ENCODE measurements at regions of chr1 and their contacts with region 1.

Region 1: GRCh38 chr1:56457756-56458375 is 121.5 kb downstream of the PLPP3 start:
- DNase-seq: no peak
- ATAC-seq: no peak
- H3K4me3 ChIP-seq: no peak overlapping the region
- H3K4me3 Mint-ChIP-seq: no peak overlapping the region
- H3K27ac ChIP-seq: no peak overlapping the region
- H3K27ac Mint-ChIP-seq: no peak overlapping the region
- H3K4me1 ChIP-seq: no peaks in the 10 kb centered on the region
- H3K4me1 Mint-ChIP-seq: peaks cover 3% of the 10 kb centered on the region
- H3K27me3 ChIP-seq: peaks cover 0 to 2% (median 0%) of the 10 kb centered on the region in 4 experiments
- H3K27me3 Mint-ChIP-seq: no peaks in the 10 kb centered on the region
- CTCF ChIP-seq: no peak

Region 2: DNA sequence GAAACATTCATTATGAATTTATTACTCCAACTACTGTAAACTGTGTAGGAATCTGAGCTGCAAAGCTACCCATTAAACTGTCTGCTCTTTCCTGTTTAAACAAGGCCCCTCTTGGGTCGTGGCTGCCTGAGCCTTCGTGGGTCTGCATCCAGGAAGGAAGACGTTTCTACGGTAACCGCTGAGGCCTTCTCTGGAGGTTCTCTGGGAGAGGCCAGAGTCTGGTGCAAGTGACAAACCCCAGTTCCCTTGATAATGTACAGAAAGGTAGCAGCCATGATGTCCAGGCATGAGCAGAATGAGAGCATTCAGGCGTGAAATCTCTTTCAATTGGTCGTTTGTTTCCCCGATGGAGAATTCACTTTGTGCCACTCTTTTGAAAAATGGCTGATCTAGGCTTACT is 228.7 kb before region 1 on chr1:
- CTCF ChIA-PET with region 1: no interaction called
- POLR2A ChIA-PET with region 1: no interaction called
- intact Hi-C with region 1: no loop called
- DNase-seq: no peak
- ATAC-seq: no peak
- H3K4me3 ChIP-seq: no peak overlapping the region
- H3K4me3 Mint-ChIP-seq: no peak overlapping the region
- H3K27ac ChIP-seq: no peak overlapping the region
- H3K27ac Mint-ChIP-seq: no peak overlapping the region
- H3K4me1 ChIP-seq: no peaks in the 10 kb centered on the region
- H3K4me1 Mint-ChIP-seq: no peaks in the 10 kb centered on the region
- H3K27me3 ChIP-seq: peaks cover 0 to 2% (median 0%) of the 10 kb centered on the region in 4 experiments
- H3K27me3 Mint-ChIP-seq: peaks cover 6% of the 10 kb centered on the region
- CTCF ChIP-seq: no peak

Region 3: DNA sequence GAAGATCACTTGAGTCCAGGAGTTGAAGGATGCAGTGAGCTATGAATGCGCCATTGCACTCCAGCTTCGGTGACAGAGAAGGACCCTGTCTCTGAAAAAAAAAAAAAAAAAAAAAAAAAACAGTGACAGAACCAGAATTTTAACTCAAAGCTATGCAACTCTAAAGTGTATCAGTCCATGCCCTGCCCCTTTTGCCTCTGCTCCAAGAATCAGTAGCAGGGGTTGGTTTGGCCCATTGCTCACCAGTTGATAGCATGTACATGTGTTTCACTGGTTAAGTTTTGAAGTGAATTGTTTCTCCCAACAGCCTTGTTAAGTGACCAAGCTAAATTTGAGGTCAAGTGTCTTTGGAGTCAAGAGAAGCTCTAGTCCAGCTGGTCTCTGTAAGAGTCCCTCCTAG is 124.4 kb before region 1 on chr1:
- CTCF ChIA-PET with region 1: no interaction called
- POLR2A ChIA-PET with region 1: interaction called, 11 read pairs
- intact Hi-C with region 1: no loop called
- DNase-seq: no peak
- ATAC-seq: no peak
- H3K4me3 ChIP-seq: no peak overlapping the region
- H3K4me3 Mint-ChIP-seq: no peak overlapping the region
- H3K27ac ChIP-seq: no peak overlapping the region
- H3K27ac Mint-ChIP-seq: no peak overlapping the region
- H3K4me1 ChIP-seq: no peaks in the 10 kb centered on the region
- H3K4me1 Mint-ChIP-seq: no peaks in the 10 kb centered on the region
- H3K27me3 ChIP-seq: no peaks in the 10 kb centered on the region
- H3K27me3 Mint-ChIP-seq: peaks cover 5% of the 10 kb centered on the region
- CTCF ChIP-seq: no peak

Measured in B cell (primary cell).